OCI-LY7 (cell line): ENCODE measurements at regions of chr13 and their contacts with region 1.

Region 1: DNA sequence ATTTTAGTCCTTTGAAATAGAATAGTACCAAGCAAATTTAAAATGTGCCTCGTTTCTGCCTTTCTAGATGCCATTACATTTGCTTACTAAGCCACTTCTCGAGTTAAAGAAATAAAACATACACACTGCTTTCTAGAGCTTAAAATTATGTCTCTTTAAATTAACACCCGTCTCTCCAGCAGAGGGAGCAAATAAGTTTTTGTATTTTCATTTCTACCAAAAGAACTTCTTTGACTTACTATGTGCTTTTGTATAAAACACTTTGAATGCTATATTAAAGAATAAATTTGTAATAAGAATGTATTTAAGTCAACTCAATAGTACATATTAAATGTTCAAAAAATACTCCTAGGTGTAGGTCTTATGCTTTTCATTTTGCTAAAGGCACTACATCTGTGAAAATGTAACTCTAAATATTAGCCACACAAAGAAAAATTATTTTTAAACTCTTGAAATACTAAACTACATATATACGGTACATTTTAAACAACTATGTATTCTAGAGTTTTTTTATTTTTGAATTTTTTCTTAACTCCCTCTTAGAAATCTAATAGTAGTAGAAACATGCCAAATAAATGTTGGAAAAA is 269.3 kb upstream of the MIR17HG start:
- DNase-seq: peak; percentile 53
- H3K4me3 ChIP-seq: no peak overlapping the region
- H3K27ac ChIP-seq: no peak overlapping the region
- H3K4me1 ChIP-seq: no peaks in the 10 kb centered on the region
- CTCF ChIP-seq: no peak

Region 2: GRCh38 chr13:91066745-91067144 is 11.4 kb before region 1 on chr13:
- CTCF ChIA-PET with region 1: interaction called, 4 read pairs
- POLR2A ChIA-PET with region 1: interaction called, 13 read pairs
- intact Hi-C with region 1: no loop called
- DNase-seq: no peak
- H3K4me3 ChIP-seq: no peak overlapping the region
- H3K27ac ChIP-seq: no peak overlapping the region
- H3K4me1 ChIP-seq: no peaks in the 10 kb centered on the region
- CTCF ChIP-seq: no peak

Region 3: GRCh38 chr13:91450913-91451312 is 372.7 kb after region 1 on chr13:
- CTCF ChIA-PET with region 1: no interaction called
- POLR2A ChIA-PET with region 1: no interaction called
- intact Hi-C with region 1: no loop called
- DNase-seq: no peak
- H3K4me3 ChIP-seq: no peak overlapping the region
- H3K27ac ChIP-seq: no peak overlapping the region
- H3K4me1 ChIP-seq: no peaks in the 10 kb centered on the region
- CTCF ChIP-seq: no peak